ENCODE measurements at regions of chr4 and their contacts with region 1.

Region 1: GRCh38 chr4:185471235-185472102 is at the start of gene CCDC110:
- DNase-seq: peak; percentile 93
- H3K4me3 ChIP-seq: peak within 1 kb of the TSS; percentile 70
- H3K4me3 Mint-ChIP-seq: peak within 1 kb of the TSS; percentile 78
- H3K27ac Mint-ChIP-seq: no peak within 1 kb of the TSS
- H3K4me1 ChIP-seq: 0 out of 2 replicates have a peak, but pooled peaks cover 3% of the 10 kb centered on the region
- H3K4me1 Mint-ChIP-seq: no peaks in the 10 kb centered on the region
- H3K27me3 ChIP-seq: no peaks in the 10 kb centered on the region; the same call in 1 of the 2 replicates
- H3K27me3 Mint-ChIP-seq: peaks cover 29% of the 10 kb centered on the region
- CTCF ChIP-seq: peak; percentile 2 to 67
- total RNA-seq, gene CCDC110: not detected in 2 replicates

Region 2: GRCh38 chr4:185504098-185505047 is 32.9 kb after region 1 on chr4:
- CTCF ChIA-PET with region 1: no interaction called
- POLR2A ChIA-PET with region 1: interaction called, 4 read pairs
- intact Hi-C with region 1: loop called (anchors 1 kb)
- DNase-seq: peak; percentile 85 to 90
- H3K4me3 ChIP-seq: peak overlapping the region; percentile 26
- H3K4me3 Mint-ChIP-seq: peak overlapping the region; percentile 73
- H3K27ac Mint-ChIP-seq: peak overlapping the region; percentile 86
- H3K4me1 ChIP-seq: peaks cover 12% of the 10 kb centered on the region
- H3K4me1 Mint-ChIP-seq: peaks cover 8% of the 10 kb centered on the region
- H3K27me3 ChIP-seq: no peaks in the 10 kb centered on the region
- H3K27me3 Mint-ChIP-seq: no peaks in the 10 kb centered on the region
- CTCF ChIP-seq: no peak

Region 3: DNA sequence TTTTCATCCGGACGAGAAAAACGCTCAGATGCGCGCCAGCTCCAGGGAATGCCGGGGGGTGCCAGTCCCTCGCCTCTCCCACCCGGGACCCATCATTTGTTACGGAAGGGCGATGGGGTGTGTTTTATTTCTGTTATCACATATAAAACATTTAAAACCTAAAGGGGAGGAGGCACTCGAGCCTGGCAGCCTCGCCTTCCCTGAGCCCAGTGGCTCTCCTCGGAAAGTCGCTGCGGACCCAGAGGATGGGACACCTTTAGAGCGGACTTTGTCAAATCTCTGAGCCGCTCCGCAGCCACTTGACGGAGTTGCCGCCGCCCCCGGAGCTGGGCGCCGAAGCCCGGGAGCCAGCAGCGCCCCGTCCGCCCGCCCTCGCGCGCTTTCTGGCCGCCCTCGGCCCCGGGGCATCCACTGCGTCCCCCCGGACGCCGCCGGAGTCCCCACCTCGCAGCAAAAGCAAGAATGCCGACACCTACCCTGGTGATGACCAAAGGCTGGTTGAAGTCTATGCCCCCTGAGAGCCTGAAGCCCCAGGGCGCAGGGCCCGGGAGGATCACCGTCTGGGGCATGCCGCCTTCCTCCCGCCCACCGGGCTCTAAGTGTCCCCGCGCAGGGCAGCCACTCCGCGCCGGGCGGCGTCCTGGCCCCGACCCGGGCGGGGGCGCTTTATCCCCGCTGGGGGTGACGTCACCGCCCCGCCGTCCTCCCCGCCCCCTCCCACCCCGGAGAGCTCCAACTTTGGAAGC is 63.6 kb after region 1 on chr4 and contains the start of gene PDLIM3:
- CTCF ChIA-PET with region 1: no interaction called
- POLR2A ChIA-PET with region 1: no interaction called
- intact Hi-C with region 1: loop called (anchors 1 kb)
- DNase-seq: peak; percentile 52 to 73
- H3K4me3 ChIP-seq: peak within 1 kb of the TSS; percentile 55
- H3K4me3 Mint-ChIP-seq: peak within 1 kb of the TSS; percentile 72
- H3K27ac Mint-ChIP-seq: no peak within 1 kb of the TSS
- H3K4me1 ChIP-seq: peaks cover 4% of the 10 kb centered on the region; the same call in 1 of the 2 replicates
- H3K4me1 Mint-ChIP-seq: no peaks in the 10 kb centered on the region
- H3K27me3 ChIP-seq: peaks cover 2% of the 10 kb centered on the region
- H3K27me3 Mint-ChIP-seq: peaks cover 5% of the 10 kb centered on the region
- CTCF ChIP-seq: no peak
- total RNA-seq, gene PDLIM3: 3.6 and 4.8 TPM in 2 replicates

Region 4: GRCh38 chr4:186037692-186038658 is 566.5 kb after region 1 on chr4:
- CTCF ChIA-PET with region 1: no interaction called
- POLR2A ChIA-PET with region 1: no interaction called
- intact Hi-C with region 1: loop called (anchors 1 kb)
- DNase-seq: peak in 1 of 2 experiments; percentile 61
- H3K4me3 ChIP-seq: no peak overlapping the region
- H3K4me3 Mint-ChIP-seq: no peak overlapping the region
- H3K27ac Mint-ChIP-seq: no peak overlapping the region
- H3K4me1 ChIP-seq: 0 out of 2 replicates have a peak, but pooled peaks cover 5% of the 10 kb centered on the region
- H3K4me1 Mint-ChIP-seq: no peaks in the 10 kb centered on the region
- H3K27me3 ChIP-seq: no peaks in the 10 kb centered on the region
- H3K27me3 Mint-ChIP-seq: peaks cover 3% of the 10 kb centered on the region
- CTCF ChIP-seq: peak; percentile 47 to 62